HCT116 (cell line): ENCODE measurements at regions of chr1 and their contacts with region 1.

Region 1: DNA sequence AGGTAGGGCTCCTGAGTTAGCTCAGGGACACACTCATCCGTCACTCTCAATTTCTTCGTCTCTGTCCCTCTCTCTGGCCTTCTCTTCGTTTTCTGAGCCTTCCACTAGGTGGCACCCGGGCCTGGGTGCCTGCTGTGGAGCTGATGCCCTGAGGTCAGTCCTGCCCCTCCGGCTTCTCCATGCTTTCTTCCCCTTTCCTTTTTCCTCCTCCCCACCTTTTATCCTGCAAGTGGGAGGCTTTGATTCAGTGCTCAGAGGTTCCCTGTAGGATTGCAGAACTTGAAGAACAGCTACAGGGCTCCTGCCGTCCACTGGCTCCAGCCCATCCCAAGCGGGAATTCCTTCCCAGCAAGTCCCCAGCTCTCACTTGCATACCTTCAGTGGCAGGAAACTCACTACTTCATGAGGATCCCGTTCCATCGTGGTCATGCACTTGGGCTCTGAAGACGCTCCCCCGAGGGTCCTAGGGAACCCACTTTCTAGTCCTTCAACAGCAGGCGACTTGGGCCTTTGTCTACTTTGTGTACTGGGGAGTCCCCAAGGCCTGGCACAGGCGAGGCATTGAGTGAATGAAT is 45.6 kb downstream of the SRRM1 start:
- DNase-seq: peak; percentile 36
- ATAC-seq: peak; percentile 80
- H3K4me3 ChIP-seq: no peak overlapping the region
- H3K27ac ChIP-seq: no peak overlapping the region
- H3K4me1 ChIP-seq: peaks cover 7 to 29% of the 10 kb centered on the region in 2 experiments
- H3K27me3 ChIP-seq: no peaks in the 10 kb centered on the region
- CTCF ChIP-seq: peak; percentile 80 to 88 (median 87); a peak in 5 of 6 replicates
- POLR2A ChIP-seq: no peak
- RAD21 ChIP-seq: peak; percentile 94

Region 2: GRCh38 chr1:24705260-24706073 is 16.8 kb after region 1 on chr1:
- CTCF ChIA-PET with region 1: interaction called, 10 read pairs
- POLR2A ChIA-PET with region 1: no interaction called
- RAD21 ChIA-PET with region 1: no interaction called
- intact Hi-C with region 1: no loop called
- DNase-seq: peak; percentile 81
- ATAC-seq: peak; percentile 97
- H3K4me3 ChIP-seq: peak overlapping the region; percentile 20 to 21
- H3K27ac ChIP-seq: peak overlapping the region; percentile 58
- H3K4me1 ChIP-seq: peaks cover 21 to 62% of the 10 kb centered on the region in 2 experiments; a peak in 3 of 4 replicates
- H3K27me3 ChIP-seq: no peaks in the 10 kb centered on the region
- CTCF ChIP-seq: no peak
- POLR2A ChIP-seq: no peak
- RAD21 ChIP-seq: no peak

Region 3: GRCh38 chr1:24744911-24745710 is 56.4 kb after region 1 on chr1 and contains the start of gene CLIC4:
- CTCF ChIA-PET with region 1: interaction called, 6 read pairs
- POLR2A ChIA-PET with region 1: interaction called, 20 read pairs
- RAD21 ChIA-PET with region 1: no interaction called
- intact Hi-C with region 1: no loop called
- DNase-seq: peak; percentile 94
- ATAC-seq: peak; percentile 93
- H3K4me3 ChIP-seq: peak within 1 kb of the TSS; percentile 62 to 80
- H3K27ac ChIP-seq: peak within 1 kb of the TSS; percentile 67
- H3K4me1 ChIP-seq: peaks cover 20 to 42% of the 10 kb centered on the region in 2 experiments
- H3K27me3 ChIP-seq: no peaks in the 10 kb centered on the region
- CTCF ChIP-seq: no peak
- POLR2A ChIP-seq: peak; percentile 42
- RAD21 ChIP-seq: peak; percentile 54
- total RNA-seq, gene CLIC4: 77.2 TPM